ENCODE measurements at regions of chr18 and their contacts with region 1.

Region 1: GRCh38 chr18:21053127-21053526 is 58.5 kb downstream of the ROCK1 start:
- DNase-seq: no peak
- ATAC-seq: no peak
- H3K4me3 ChIP-seq: no peak overlapping the region
- H3K4me3 Mint-ChIP-seq: no peak overlapping the region
- H3K27ac ChIP-seq: no peak overlapping the region
- H3K27ac Mint-ChIP-seq: peak overlapping the region in 4 of 9 donors; percentile 10 to 30 (median 24)
- H3K4me1 ChIP-seq: peaks cover 18 to 21% of the 10 kb centered on the region in 2 donors
- H3K4me1 Mint-ChIP-seq: peaks cover 5 to 55% (median 35%) of the 10 kb centered on the region in 7 donors
- H3K27me3 ChIP-seq: no peaks in the 10 kb centered on the region
- H3K27me3 Mint-ChIP-seq: no peaks in the 10 kb centered on the region

Region 2: GRCh38 chr18:21085579-21086166 is 32.5 kb after region 1 on chr18:
- CTCF ChIA-PET with region 1: no interaction called
- POLR2A ChIA-PET with region 1: no interaction called
- intact Hi-C with region 1: loop called in 1 of 2 experiments (anchors 5 kb)
- DNase-seq: no peak
- ATAC-seq: no peak
- H3K4me3 ChIP-seq: no peak overlapping the region
- H3K4me3 Mint-ChIP-seq: peak overlapping the region in 6 of 10 donors; percentile 15 to 63 (median 46)
- H3K27ac ChIP-seq: no peak overlapping the region
- H3K27ac Mint-ChIP-seq: peak overlapping the region in 1 of 9 donors; percentile 41
- H3K4me1 ChIP-seq: peaks cover 5 to 19% of the 10 kb centered on the region in 2 donors
- H3K4me1 Mint-ChIP-seq: peaks cover 41 to 88% (median 78%) of the 10 kb centered on the region in 7 donors
- H3K27me3 ChIP-seq: no peaks in the 10 kb centered on the region
- H3K27me3 Mint-ChIP-seq: no peaks in the 10 kb centered on the region

Region 3: GRCh38 chr18:21134898-21135297 is 81.8 kb after region 1 on chr18:
- CTCF ChIA-PET with region 1: no interaction called
- POLR2A ChIA-PET with region 1: no interaction called
- intact Hi-C with region 1: no loop called
- DNase-seq: peak in 7 of 9 donors; percentile 17 to 56 (median 27)
- ATAC-seq: peak; percentile 52
- H3K4me3 ChIP-seq: no peak overlapping the region
- H3K4me3 Mint-ChIP-seq: no peak overlapping the region
- H3K27ac ChIP-seq: no peak overlapping the region
- H3K27ac Mint-ChIP-seq: no peak overlapping the region
- H3K4me1 ChIP-seq: no peaks in the 10 kb centered on the region
- H3K4me1 Mint-ChIP-seq: peaks cover 0 to 4% (median 0%) of the 10 kb centered on the region in 7 donors
- H3K27me3 ChIP-seq: no peaks in the 10 kb centered on the region
- H3K27me3 Mint-ChIP-seq: peaks cover 0 to 2% (median 0%) of the 10 kb centered on the region in 5 donors

Region 4: DNA sequence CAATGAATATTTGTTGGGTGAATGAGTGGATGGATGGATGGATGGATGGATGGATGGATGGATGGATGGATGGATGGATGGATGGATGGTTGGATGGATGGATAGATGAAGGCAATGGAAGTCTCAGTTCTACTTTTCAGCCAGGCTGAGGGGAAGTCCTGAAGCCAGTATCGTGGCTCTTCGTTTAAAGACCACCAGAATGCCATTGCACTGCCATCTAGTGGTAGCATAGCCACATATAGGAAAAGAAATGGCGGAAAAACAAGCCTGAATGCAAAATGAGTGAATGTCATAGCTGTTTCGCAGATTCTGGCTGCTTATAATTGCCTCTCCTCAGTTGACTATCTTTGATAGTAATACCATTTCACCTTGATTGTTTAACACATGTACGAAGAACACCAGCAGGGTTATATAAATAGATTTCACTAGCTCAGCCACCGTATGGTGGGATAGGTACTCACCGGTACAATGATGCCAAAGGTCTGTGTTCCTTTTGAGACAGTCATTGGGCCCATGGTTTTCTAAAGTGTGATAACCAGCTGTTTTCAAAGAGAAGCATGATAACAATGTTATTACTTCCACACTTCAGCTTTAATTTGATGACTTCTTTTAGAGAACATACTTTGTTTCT is 126.6 kb after region 1 on chr18:
- CTCF ChIA-PET with region 1: interaction called, 3 read pairs
- POLR2A ChIA-PET with region 1: no interaction called
- intact Hi-C with region 1: loop called in 1 of 2 experiments (anchors 5 kb)
- DNase-seq: peak in 6 of 9 donors; percentile 4 to 49 (median 18)
- ATAC-seq: peak; percentile 82
- H3K4me3 ChIP-seq: no peak overlapping the region
- H3K4me3 Mint-ChIP-seq: no peak overlapping the region
- H3K27ac ChIP-seq: no peak overlapping the region
- H3K27ac Mint-ChIP-seq: no peak overlapping the region
- H3K4me1 ChIP-seq: no peaks in the 10 kb centered on the region
- H3K4me1 Mint-ChIP-seq: peaks cover 0 to 10% (median 7%) of the 10 kb centered on the region in 7 donors
- H3K27me3 ChIP-seq: no peaks in the 10 kb centered on the region
- H3K27me3 Mint-ChIP-seq: peaks cover 0 to 2% (median 0%) of the 10 kb centered on the region in 5 donors

Measured in naive thymus-derived CD4-positive, alpha-beta T cell (primary cell).